Mammary epithelial cell (primary cell): ENCODE measurements at regions of chr18 and their contacts with region 1.

Region 1: GRCh38 chr18:44852818-44853217 is 172.1 kb downstream of the SETBP1 start:
- DNase-seq: no peak
- H3K4me3 ChIP-seq: no peak overlapping the region
- H3K27ac ChIP-seq: no peak overlapping the region
- H3K4me1 ChIP-seq: peaks cover 13% of the 10 kb centered on the region
- H3K27me3 ChIP-seq: no peaks in the 10 kb centered on the region
- CTCF ChIP-seq: no peak

Region 2: DNA sequence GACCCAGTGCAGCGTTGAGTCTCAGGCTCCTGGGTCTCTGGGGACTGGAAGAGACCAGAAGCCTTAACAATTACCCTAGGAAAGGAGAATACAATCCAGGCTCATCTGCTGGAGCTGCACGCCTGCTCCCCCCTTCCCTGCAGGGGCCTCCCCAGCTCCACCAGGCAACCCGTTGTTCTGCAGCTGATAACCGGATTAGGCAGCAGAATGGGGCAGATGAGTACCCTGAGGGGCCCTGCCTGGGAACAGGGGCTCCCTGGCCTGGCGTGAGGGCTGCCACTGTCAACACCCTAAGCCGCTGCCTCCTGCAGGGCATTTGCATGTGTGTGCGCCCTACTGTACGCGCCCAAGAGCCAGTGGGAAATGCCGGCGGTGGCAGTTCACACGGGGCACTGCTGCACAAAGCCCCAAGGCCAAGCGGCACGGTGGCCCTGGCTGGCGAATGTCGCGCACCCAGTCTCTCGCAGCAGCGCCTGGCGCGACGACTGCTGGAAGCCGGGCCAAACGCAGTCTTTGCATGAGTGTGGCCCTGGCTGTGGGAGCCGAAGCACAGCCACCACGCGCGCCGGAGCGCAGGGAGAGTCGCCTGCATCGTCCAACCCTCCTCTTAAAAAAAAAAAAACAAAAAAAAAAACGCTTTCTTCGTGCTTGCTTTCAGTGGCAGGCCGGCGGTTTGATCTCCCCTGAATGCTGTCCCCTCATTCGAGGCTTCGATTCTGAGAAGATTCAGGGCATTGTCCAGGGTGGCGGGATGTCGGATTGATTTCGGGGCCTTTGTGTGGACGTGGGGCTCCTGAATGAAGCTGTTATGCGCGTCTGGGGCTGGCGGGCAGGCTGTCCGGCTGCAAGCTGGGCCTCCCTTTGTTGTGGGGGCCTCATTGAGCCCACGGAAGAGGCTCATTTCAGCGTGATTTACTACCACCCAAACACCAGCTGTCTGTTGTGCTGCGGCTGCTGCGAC is 108.4 kb before region 1 on chr18:
- CTCF ChIA-PET with region 1: no interaction called
- dilution Hi-C with region 1: loop called (anchors 5 kb)
- in situ Hi-C with region 1: no loop called
- intact Hi-C with region 1: no loop called
- DNase-seq: no peak
- H3K4me3 ChIP-seq: no peak overlapping the region
- H3K27ac ChIP-seq: no peak overlapping the region
- H3K4me1 ChIP-seq: peaks cover 23% of the 10 kb centered on the region
- H3K27me3 ChIP-seq: no peaks in the 10 kb centered on the region
- CTCF ChIP-seq: no peak